ENCODE measurements at regions of chr9 and their contacts with region 1.

Region 1: DNA sequence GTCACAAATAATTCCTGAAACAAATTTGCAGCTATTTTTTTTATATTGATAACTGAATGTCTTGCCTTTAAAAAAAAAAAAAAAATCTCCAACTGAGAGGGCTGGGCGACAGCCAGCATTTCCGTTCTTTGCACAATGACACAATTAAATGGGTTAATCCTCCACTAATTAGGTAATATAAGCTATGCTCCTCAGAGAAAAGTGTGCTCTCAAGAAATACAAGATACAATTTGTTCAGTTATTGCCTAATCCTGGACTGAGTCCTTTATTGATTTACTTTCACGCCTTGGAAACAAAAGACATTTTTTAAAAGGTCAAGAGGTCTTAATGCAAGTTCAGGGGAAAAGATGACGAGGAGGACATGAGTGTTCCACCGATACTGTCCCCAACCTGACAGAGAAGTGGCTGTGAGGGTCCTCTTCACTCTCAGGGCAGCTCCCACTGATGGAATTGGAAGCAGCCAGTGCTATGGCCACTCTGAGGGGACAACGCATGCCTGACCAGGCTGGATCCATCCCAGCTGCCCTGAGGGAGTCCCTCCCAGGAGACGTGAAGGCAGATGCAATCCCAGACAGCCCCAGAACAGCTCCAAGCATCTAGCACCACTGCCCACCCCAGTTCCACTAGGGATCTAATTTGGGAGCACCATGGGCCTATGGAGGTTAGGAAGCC is 220.7 kb downstream of the GNA14 start:
- DNase-seq: peak; percentile 84
- H3K4me3 ChIP-seq: no peak overlapping the region
- H3K27ac ChIP-seq: no peak overlapping the region
- H3K4me1 ChIP-seq: peaks cover 16% of the 10 kb centered on the region
- H3K27me3 ChIP-seq: peaks cover 5% of the 10 kb centered on the region
- CTCF ChIP-seq: no peak

Region 2: GRCh38 chr9:77291714-77292113 is 135.7 kb before region 1 on chr9:
- CTCF ChIA-PET with region 1: no interaction called
- POLR2A ChIA-PET with region 1: no interaction called
- intact Hi-C with region 1: loop called (anchors 5 kb)
- DNase-seq: peak; percentile 75
- H3K4me3 ChIP-seq: no peak overlapping the region
- H3K27ac ChIP-seq: no peak overlapping the region
- H3K4me1 ChIP-seq: no peaks in the 10 kb centered on the region
- H3K27me3 ChIP-seq: no peaks in the 10 kb centered on the region
- CTCF ChIP-seq: peak; percentile 71

Region 3: GRCh38 chr9:77440057-77440456 is 12.7 kb after region 1 on chr9:
- CTCF ChIA-PET with region 1: interaction called, 4 read pairs
- POLR2A ChIA-PET with region 1: no interaction called
- intact Hi-C with region 1: loop called (anchors 1 kb)
- DNase-seq: peak; percentile 99
- H3K4me3 ChIP-seq: peak overlapping the region; percentile 10
- H3K27ac ChIP-seq: peak overlapping the region; percentile 95
- H3K4me1 ChIP-seq: peaks cover 55% of the 10 kb centered on the region
- H3K27me3 ChIP-seq: no peaks in the 10 kb centered on the region
- CTCF ChIP-seq: no peak

Region 4: GRCh38 chr9:78462616-78463015 is 1035.2 kb after region 1 on chr9:
- CTCF ChIA-PET with region 1: no interaction called
- POLR2A ChIA-PET with region 1: no interaction called
- intact Hi-C with region 1: no loop called
- DNase-seq: no peak
- H3K4me3 ChIP-seq: no peak overlapping the region
- H3K27ac ChIP-seq: no peak overlapping the region
- H3K4me1 ChIP-seq: no peaks in the 10 kb centered on the region
- H3K27me3 ChIP-seq: peaks cover 9% of the 10 kb centered on the region
- CTCF ChIP-seq: no peak

Measured in A673 (cell line).